CD4-positive, alpha-beta memory T cell (primary cell): ENCODE measurements at regions of chr12 and their contacts with region 1.

Region 1: GRCh38 chr12:51047655-51048540 is at the start of gene LETMD1:
- DNase-seq: peak; percentile 94 to 97 (median 96)
- H3K4me3 ChIP-seq: peak within 1 kb of the TSS; percentile 92 to 98
- H3K4me3 Mint-ChIP-seq: peak within 1 kb of the TSS; percentile 93 to 98 (median 95)
- H3K27ac ChIP-seq: peak within 1 kb of the TSS; percentile 81
- H3K27ac Mint-ChIP-seq: peak within 1 kb of the TSS; percentile 95 to 99 (median 97)
- H3K4me1 ChIP-seq: peaks cover 27% of the 10 kb centered on the region
- H3K4me1 Mint-ChIP-seq: peaks cover 15 to 40% (median 28%) of the 10 kb centered on the region in 4 donors
- H3K27me3 ChIP-seq: no peaks in the 10 kb centered on the region
- H3K27me3 Mint-ChIP-seq: no peaks in the 10 kb centered on the region
- total RNA-seq, gene LETMD1: 83.7 to 93.3 TPM

Region 2: GRCh38 chr12:51025836-51026638 is 21.9 kb before region 1 on chr12 and contains the start of gene SLC11A2:
- CTCF ChIA-PET with region 1: interaction called, 7 read pairs
- POLR2A ChIA-PET with region 1: interaction called, 32 read pairs
- intact Hi-C with region 1: loop called (anchors 1 kb)
- DNase-seq: peak; percentile 89 to 93 (median 89)
- H3K4me3 ChIP-seq: peak within 1 kb of the TSS; percentile 78 to 89
- H3K4me3 Mint-ChIP-seq: peak within 1 kb of the TSS; percentile 97 to 100 (median 98)
- H3K27ac ChIP-seq: peak within 1 kb of the TSS; percentile 83
- H3K27ac Mint-ChIP-seq: peak within 1 kb of the TSS; percentile 95 to 99 (median 98)
- H3K4me1 ChIP-seq: peaks cover 41% of the 10 kb centered on the region
- H3K4me1 Mint-ChIP-seq: peaks cover 26 to 68% (median 47%) of the 10 kb centered on the region in 4 donors
- H3K27me3 ChIP-seq: no peaks in the 10 kb centered on the region
- H3K27me3 Mint-ChIP-seq: no peaks in the 10 kb centered on the region
- total RNA-seq, gene SLC11A2: 55.1 to 62.7 TPM

Region 3: GRCh38 chr12:51147309-51147708 is 99.4 kb after region 1 on chr12:
- CTCF ChIA-PET with region 1: no interaction called
- POLR2A ChIA-PET with region 1: no interaction called
- intact Hi-C with region 1: no loop called
- DNase-seq: no peak
- H3K4me3 ChIP-seq: no peak overlapping the region
- H3K4me3 Mint-ChIP-seq: no peak overlapping the region
- H3K27ac ChIP-seq: no peak overlapping the region
- H3K27ac Mint-ChIP-seq: peak overlapping the region in 4 of 7 donors; percentile 23 to 72 (median 56)
- H3K4me1 ChIP-seq: peaks cover 2% of the 10 kb centered on the region
- H3K4me1 Mint-ChIP-seq: peaks cover 34 to 42% (median 41%) of the 10 kb centered on the region in 4 donors
- H3K27me3 ChIP-seq: no peaks in the 10 kb centered on the region
- H3K27me3 Mint-ChIP-seq: no peaks in the 10 kb centered on the region

Region 4: DNA sequence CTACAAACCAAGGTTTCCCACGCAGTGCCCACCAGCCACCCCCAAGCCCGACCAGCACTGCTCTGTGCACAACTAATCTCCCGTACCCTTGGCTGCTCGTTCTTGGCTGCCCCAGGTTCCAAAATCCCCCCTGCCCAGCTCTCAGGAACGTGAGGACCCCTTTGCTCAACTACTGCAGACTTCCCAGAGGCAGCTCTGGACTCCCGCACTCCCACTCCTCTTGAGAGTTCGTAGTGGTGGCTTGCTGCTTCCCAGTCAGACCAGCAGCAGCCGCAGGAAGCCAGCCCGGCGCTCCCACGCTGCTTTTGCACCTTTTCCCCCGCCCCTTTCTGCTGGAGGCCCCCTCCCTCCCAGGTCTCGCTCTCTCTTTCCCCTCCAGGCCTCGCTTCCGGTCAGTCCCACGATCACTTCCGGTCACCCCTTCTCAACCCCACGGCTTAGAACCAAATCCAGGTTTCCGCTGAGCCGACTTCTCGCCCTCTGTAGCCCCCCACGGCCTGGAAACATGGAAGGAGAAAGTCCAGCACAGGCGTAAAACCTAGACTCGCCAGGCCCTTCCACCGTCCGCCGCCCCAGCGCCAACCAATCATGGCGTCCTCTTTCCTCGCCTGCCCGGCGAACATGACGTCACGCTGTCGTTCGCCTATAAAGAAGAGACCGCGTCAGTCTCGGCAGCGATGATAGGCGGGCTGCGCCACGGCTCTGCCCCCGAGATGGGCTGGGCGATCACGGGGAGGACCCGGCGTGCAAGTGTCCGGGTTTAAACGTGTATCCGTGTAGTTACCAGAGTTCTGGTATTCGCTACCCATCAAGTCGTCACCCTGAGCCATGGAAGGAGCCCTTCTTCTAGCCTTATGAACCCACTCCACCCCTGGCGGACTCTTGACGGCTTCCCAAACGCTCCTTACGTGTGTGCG is 124.9 kb after region 1 on chr12 and contains the start of gene TFCP2:
- CTCF ChIA-PET with region 1: no interaction called
- POLR2A ChIA-PET with region 1: no interaction called
- intact Hi-C with region 1: loop called (anchors 1 kb)
- DNase-seq: peak; percentile 91 to 96 (median 92)
- H3K4me3 ChIP-seq: peak within 1 kb of the TSS; percentile 72 to 87
- H3K4me3 Mint-ChIP-seq: peak within 1 kb of the TSS in 7 of 8 donors; percentile 71 to 92 (median 85)
- H3K27ac ChIP-seq: peak within 1 kb of the TSS; percentile 96
- H3K27ac Mint-ChIP-seq: peak within 1 kb of the TSS in 6 of 7 donors; percentile 78 to 96 (median 91)
- H3K4me1 ChIP-seq: peaks cover 26% of the 10 kb centered on the region
- H3K4me1 Mint-ChIP-seq: peaks cover 10 to 22% (median 11%) of the 10 kb centered on the region in 4 donors
- H3K27me3 ChIP-seq: no peaks in the 10 kb centered on the region
- H3K27me3 Mint-ChIP-seq: no peaks in the 10 kb centered on the region
- total RNA-seq, gene TFCP2: 36.4 to 40.0 TPM

Region 5: DNA sequence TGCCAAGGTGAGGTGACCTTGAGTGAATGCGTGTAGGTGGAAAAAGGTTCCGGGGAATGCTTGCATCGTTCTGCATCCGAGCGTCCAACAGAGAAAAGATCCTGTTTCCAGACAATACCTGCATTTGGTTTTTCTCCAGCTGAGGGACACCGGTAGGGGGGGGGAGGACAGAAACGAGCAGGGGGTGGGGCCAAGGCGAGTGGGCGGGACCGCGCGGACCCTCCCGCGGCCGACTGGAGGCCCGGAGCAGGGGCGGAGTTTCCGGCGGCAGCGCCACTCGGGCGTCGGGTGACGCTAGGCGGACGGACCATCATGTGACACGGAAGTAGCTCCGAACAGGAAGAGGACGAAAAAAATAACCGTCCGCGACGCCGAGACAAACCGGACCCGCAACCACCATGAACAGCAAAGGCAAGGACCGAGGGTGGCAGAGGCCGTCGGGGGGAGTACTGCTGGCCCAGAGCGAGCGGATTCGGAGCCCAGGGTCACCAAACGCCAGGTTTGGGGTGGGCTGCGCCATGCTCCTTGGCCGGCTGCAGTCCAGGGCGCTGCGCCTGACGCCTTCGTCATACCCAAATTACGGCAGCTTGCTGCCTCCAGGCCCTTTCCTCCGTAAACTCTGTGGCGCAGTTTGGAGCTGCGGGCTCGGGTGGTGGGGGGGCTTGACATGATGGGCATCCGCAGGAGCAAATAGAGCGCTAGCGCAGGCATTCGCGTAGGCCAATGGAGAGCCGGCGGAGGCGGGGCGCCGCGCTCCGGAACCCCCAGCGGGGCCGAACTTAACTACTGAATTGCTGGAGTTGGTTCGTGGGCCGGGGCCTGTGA is 190.8 kb after region 1 on chr12 and contains the start of gene DAZAP2:
- CTCF ChIA-PET with region 1: no interaction called
- POLR2A ChIA-PET with region 1: interaction called, 10 read pairs
- intact Hi-C with region 1: loop called (anchors 1 kb)
- DNase-seq: peak; percentile 91 to 95 (median 94)
- H3K4me3 ChIP-seq: peak within 1 kb of the TSS; percentile 98 to 100
- H3K4me3 Mint-ChIP-seq: peak within 1 kb of the TSS; percentile 93 to 99 (median 98)
- H3K27ac ChIP-seq: peak within 1 kb of the TSS; percentile 100
- H3K27ac Mint-ChIP-seq: peak within 1 kb of the TSS; percentile 99 to 100 (median 100)
- H3K4me1 ChIP-seq: peaks cover 40% of the 10 kb centered on the region
- H3K4me1 Mint-ChIP-seq: peaks cover 27 to 57% (median 40%) of the 10 kb centered on the region in 4 donors
- H3K27me3 ChIP-seq: no peaks in the 10 kb centered on the region
- H3K27me3 Mint-ChIP-seq: peaks cover 0 to 1% of the 10 kb centered on the region in 2 donors
- total RNA-seq, gene DAZAP2: 275 to 286 TPM

Region 6: GRCh38 chr12:51270067-51270970 is 222.4 kb after region 1 on chr12 and contains the start of gene SMAGP:
- CTCF ChIA-PET with region 1: no interaction called
- POLR2A ChIA-PET with region 1: interaction called, 3 read pairs
- intact Hi-C with region 1: loop called (anchors 1 kb)
- DNase-seq: peak; percentile 36 to 51 (median 38)
- H3K4me3 ChIP-seq: peak within 1 kb of the TSS; percentile 3 to 57
- H3K4me3 Mint-ChIP-seq: peak within 1 kb of the TSS; percentile 88 to 97 (median 96)
- H3K27ac ChIP-seq: peak within 1 kb of the TSS; percentile 2
- H3K27ac Mint-ChIP-seq: peak within 1 kb of the TSS; percentile 80 to 95 (median 90)
- H3K4me1 ChIP-seq: peaks cover 20% of the 10 kb centered on the region
- H3K4me1 Mint-ChIP-seq: peaks cover 19 to 38% (median 24%) of the 10 kb centered on the region in 4 donors
- H3K27me3 ChIP-seq: no peaks in the 10 kb centered on the region
- H3K27me3 Mint-ChIP-seq: no peaks in the 10 kb centered on the region
- total RNA-seq, gene SMAGP: 3.9 to 5.5 TPM

Region 7: GRCh38 chr12:51281202-51281924 is 233.5 kb after region 1 on chr12:
- CTCF ChIA-PET with region 1: no interaction called
- POLR2A ChIA-PET with region 1: no interaction called
- intact Hi-C with region 1: no loop called
- DNase-seq: no peak
- H3K4me3 ChIP-seq: no peak overlapping the region
- H3K4me3 Mint-ChIP-seq: no peak overlapping the region
- H3K27ac ChIP-seq: no peak overlapping the region
- H3K27ac Mint-ChIP-seq: peak overlapping the region in 5 of 7 donors; percentile 15 to 68 (median 57)
- H3K4me1 ChIP-seq: no peaks in the 10 kb centered on the region
- H3K4me1 Mint-ChIP-seq: peaks cover 0 to 6% (median under 1%) of the 10 kb centered on the region in 4 donors
- H3K27me3 ChIP-seq: no peaks in the 10 kb centered on the region
- H3K27me3 Mint-ChIP-seq: no peaks in the 10 kb centered on the region

Region 8: DNA sequence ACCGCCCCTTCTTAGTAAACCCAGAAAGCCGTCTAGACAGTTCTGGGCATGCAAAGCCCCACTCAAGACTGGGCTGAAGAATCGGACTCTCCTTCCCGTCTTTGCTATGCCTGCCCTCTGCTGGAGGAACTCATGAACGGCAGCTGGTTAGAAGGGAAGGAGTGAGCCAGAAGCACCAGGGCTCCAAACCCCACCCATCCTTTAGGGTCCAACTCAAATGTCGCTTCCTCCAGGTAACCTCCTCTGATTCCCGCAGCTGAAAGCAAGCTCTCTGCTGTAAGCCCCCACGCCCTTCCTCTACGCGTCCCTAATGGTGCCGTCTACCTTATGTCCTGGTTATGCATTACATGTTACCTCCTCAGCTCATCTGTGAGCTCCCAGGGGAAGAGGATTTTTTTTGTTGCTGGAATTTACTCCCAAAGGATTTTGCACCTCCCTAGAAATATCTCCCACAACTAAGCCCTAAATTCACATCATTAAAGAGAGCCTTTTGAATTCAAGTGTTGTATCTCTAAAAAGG is 484.1 kb after region 1 on chr12:
- CTCF ChIA-PET with region 1: interaction called, 3 read pairs
- POLR2A ChIA-PET with region 1: no interaction called
- intact Hi-C with region 1: loop called (anchors 1 kb)
- DNase-seq: peak; percentile 60 to 70 (median 65)
- H3K4me3 ChIP-seq: no peak overlapping the region
- H3K4me3 Mint-ChIP-seq: no peak overlapping the region
- H3K27ac ChIP-seq: no peak overlapping the region
- H3K27ac Mint-ChIP-seq: peak overlapping the region in 2 of 7 donors; percentile 9 to 27
- H3K4me1 ChIP-seq: no peaks in the 10 kb centered on the region
- H3K4me1 Mint-ChIP-seq: peaks cover 3 to 8% (median 6%) of the 10 kb centered on the region in 4 donors
- H3K27me3 ChIP-seq: no peaks in the 10 kb centered on the region
- H3K27me3 Mint-ChIP-seq: peaks cover 6 to 11% of the 10 kb centered on the region in 2 donors